H1 (cell line): ENCODE measurements at regions of chr3 and their contacts with region 1.

Region 1: DNA sequence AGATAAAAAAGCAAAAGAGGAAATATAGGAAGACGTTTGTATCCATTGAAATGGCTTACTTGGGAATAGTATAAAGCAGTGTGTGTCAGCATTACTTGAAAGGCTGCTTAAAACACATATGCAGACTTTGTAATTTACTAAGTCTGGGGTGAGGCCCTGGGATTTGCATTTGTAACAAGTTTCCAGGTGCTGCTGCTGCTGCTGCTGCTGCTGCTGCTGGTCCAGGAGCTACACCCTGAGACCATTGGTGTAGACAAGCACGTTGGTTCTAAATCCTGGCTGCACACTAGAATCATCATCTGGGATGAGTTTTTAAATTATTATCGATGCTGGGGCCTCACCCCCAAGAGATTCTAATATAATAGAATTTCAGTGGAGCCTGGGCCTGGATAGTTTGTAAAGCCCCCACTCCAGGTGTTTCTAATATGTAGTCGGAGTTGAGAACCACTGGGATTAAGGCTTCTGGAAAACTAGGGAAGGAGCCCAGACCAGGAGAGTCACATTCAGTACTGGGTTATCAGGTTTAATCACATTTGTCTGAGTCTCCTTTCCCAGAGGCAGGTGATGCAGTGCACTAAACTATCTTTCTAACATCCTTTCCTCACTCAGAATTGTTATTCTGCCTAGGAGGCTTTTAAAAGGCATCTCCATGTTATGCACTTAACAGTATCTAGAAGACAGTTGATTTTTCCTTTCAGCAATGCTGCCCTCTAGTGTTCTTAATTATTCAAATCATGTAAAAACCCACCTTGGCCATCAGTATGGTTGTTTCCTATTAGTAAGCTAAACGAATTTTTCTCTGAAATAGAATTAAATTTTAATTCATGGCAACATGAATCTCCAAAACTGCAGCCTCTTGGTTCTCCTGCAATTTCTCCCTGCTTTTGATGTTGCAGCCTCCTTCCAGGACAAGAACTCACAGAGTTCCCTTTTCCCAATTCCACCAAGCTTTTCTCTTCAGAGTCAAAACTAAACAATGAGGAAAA is 45.4 kb downstream of the SSR3 start:
- DNase-seq: no peak
- H3K4me3 ChIP-seq: no peak overlapping the region
- H3K27ac ChIP-seq: no peak overlapping the region
- H3K4me1 ChIP-seq: no peaks in the 10 kb centered on the region
- H3K27me3 ChIP-seq: no peaks in the 10 kb centered on the region
- CTCF ChIP-seq: peak in 2 of 3 experiments; percentile 24 to 48; a peak in 2 of 4 replicates
- EP300 ChIP-seq: no peak
- POLR2A ChIP-seq: no peak
- RAD21 ChIP-seq: peak; percentile 70 to 76

Region 2: GRCh38 chr3:156304406-156304805 is 205.1 kb before region 1 on chr3:
- CTCF ChIA-PET with region 1: no interaction called
- POLR2A ChIA-PET with region 1: no interaction called
- DNase-seq: no peak
- H3K4me3 ChIP-seq: no peak overlapping the region
- H3K27ac ChIP-seq: no peak overlapping the region
- H3K4me1 ChIP-seq: no peaks in the 10 kb centered on the region
- H3K27me3 ChIP-seq: no peaks in the 10 kb centered on the region
- CTCF ChIP-seq: no peak
- EP300 ChIP-seq: no peak
- POLR2A ChIP-seq: no peak
- RAD21 ChIP-seq: no peak

Region 3: GRCh38 chr3:156382458-156383346 is 126.8 kb before region 1 on chr3:
- CTCF ChIA-PET with region 1: interaction called, 25 read pairs
- POLR2A ChIA-PET with region 1: no interaction called
- DNase-seq: peak in 1 of 2 experiments; percentile 80
- H3K4me3 ChIP-seq: no peak overlapping the region
- H3K27ac ChIP-seq: no peak overlapping the region
- H3K4me1 ChIP-seq: no peaks in the 10 kb centered on the region
- H3K27me3 ChIP-seq: no peaks in the 10 kb centered on the region
- CTCF ChIP-seq: peak; percentile 80 to 86 (median 86)
- EP300 ChIP-seq: no peak
- POLR2A ChIP-seq: no peak
- RAD21 ChIP-seq: peak; percentile 83 to 90

Region 4: GRCh38 chr3:156474560-156475389 is 34.7 kb before region 1 on chr3:
- CTCF ChIA-PET with region 1: interaction called, 12 read pairs
- POLR2A ChIA-PET with region 1: no interaction called
- DNase-seq: no peak
- H3K4me3 ChIP-seq: peak overlapping the region in 2 of 4 experiments; percentile 10 to 38; a peak in 2 of 8 replicates
- H3K27ac ChIP-seq: no peak overlapping the region
- H3K4me1 ChIP-seq: no peaks in the 10 kb centered on the region
- H3K27me3 ChIP-seq: no peaks in the 10 kb centered on the region
- CTCF ChIP-seq: peak; percentile 46 to 66 (median 66)
- EP300 ChIP-seq: no peak
- POLR2A ChIP-seq: no peak
- RAD21 ChIP-seq: peak; percentile 54 to 66

Region 5: DNA sequence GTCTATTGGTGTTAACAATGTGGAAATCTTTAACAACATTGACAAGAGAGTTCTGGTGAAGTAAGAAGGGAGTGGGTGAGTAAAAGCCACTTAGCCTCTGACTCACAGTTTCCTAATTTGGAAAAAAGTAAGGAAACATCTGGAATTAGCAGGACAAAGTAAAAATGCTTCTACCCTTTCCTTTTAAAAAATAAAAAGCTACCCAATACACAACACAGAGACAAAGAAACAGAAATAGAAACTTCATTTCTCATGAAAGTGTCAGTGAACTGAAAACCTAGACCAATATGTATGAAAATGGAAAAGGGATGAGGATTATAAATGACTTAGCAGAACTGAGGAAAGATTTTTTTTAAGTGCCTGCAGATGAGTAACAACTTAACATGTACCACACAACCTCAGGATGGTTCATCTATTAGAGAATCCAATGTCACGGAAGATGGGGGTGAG is 20.0 kb before region 1 on chr3:
- CTCF ChIA-PET with region 1: interaction called, 15 read pairs
- POLR2A ChIA-PET with region 1: no interaction called
- DNase-seq: no peak
- H3K4me3 ChIP-seq: no peak overlapping the region
- H3K27ac ChIP-seq: no peak overlapping the region
- H3K4me1 ChIP-seq: no peaks in the 10 kb centered on the region
- H3K27me3 ChIP-seq: no peaks in the 10 kb centered on the region
- CTCF ChIP-seq: no peak
- EP300 ChIP-seq: no peak
- POLR2A ChIP-seq: no peak
- RAD21 ChIP-seq: no peak

Region 6: DNA sequence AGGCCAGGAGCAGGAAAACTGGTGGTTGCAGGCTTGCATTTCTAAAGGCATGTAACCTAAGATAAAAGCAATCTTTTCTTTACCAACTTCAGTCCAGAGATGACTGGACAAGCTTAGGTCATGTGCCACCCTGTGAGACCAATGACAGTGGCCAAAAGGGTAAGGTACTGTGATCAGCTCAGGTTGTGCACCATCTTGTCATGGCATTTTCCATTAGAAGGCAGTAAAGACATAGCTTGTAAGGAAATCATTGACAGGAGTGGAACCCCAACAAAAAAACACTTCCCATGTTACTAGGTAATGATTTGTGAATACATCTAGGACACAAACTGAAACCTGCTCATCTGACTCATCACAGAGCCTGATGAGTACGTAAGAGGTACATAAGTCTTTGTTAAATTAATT is 10.3 kb after region 1 on chr3:
- CTCF ChIA-PET with region 1: interaction called, 24 read pairs
- POLR2A ChIA-PET with region 1: no interaction called
- DNase-seq: no peak
- H3K4me3 ChIP-seq: no peak overlapping the region
- H3K27ac ChIP-seq: no peak overlapping the region
- H3K4me1 ChIP-seq: peaks cover 0 to 2% (median 0%) of the 10 kb centered on the region in 4 experiments; a peak in 1 of 7 replicates
- H3K27me3 ChIP-seq: no peaks in the 10 kb centered on the region
- CTCF ChIP-seq: no peak
- EP300 ChIP-seq: no peak
- POLR2A ChIP-seq: no peak
- RAD21 ChIP-seq: no peak

Region 7: GRCh38 chr3:156563900-156564682 is 54.6 kb after region 1 on chr3:
- CTCF ChIA-PET with region 1: no interaction called
- POLR2A ChIA-PET with region 1: no interaction called
- DNase-seq: no peak
- H3K4me3 ChIP-seq: no peak overlapping the region
- H3K27ac ChIP-seq: no peak overlapping the region
- H3K4me1 ChIP-seq: no peaks in the 10 kb centered on the region
- H3K27me3 ChIP-seq: no peaks in the 10 kb centered on the region
- CTCF ChIP-seq: no peak
- EP300 ChIP-seq: no peak
- POLR2A ChIP-seq: no peak
- RAD21 ChIP-seq: no peak

Region 8: GRCh38 chr3:156605686-156606605 is 96.5 kb after region 1 on chr3:
- CTCF ChIA-PET with region 1: no interaction called
- POLR2A ChIA-PET with region 1: no interaction called
- DNase-seq: peak; percentile 41 to 63
- H3K4me3 ChIP-seq: peak overlapping the region; percentile 29 to 58 (median 50)
- H3K27ac ChIP-seq: 0 out of 2 replicates have a peak overlapping the region, but pooled peaks have one; percentile 13
- H3K4me1 ChIP-seq: peaks cover 0 to 6% (median 2%) of the 10 kb centered on the region in 4 experiments; a peak in 2 of 7 replicates
- H3K27me3 ChIP-seq: no peaks in the 10 kb centered on the region
- CTCF ChIP-seq: no peak
- EP300 ChIP-seq: no peak
- POLR2A ChIP-seq: peak in 1 of 2 experiments; percentile 46; a peak in 2 of 3 replicates
- RAD21 ChIP-seq: no peak

Region 9: GRCh38 chr3:156723182-156723619 is 213.7 kb after region 1 on chr3:
- CTCF ChIA-PET with region 1: no interaction called
- POLR2A ChIA-PET with region 1: no interaction called
- DNase-seq: no peak
- H3K4me3 ChIP-seq: no peak overlapping the region
- H3K27ac ChIP-seq: no peak overlapping the region
- H3K4me1 ChIP-seq: peaks cover 0 to 9% (median 0%) of the 10 kb centered on the region in 4 experiments; a peak in 2 of 7 replicates
- H3K27me3 ChIP-seq: no peaks in the 10 kb centered on the region
- CTCF ChIP-seq: no peak
- EP300 ChIP-seq: no peak
- POLR2A ChIP-seq: no peak
- RAD21 ChIP-seq: no peak